Activated CD4-positive, alpha-beta T cell treated with anti-CD3 and anti-CD28 coated beads for 36 hours (primary cell): ENCODE measurements at regions of chr2 and their contacts with region 1.

Region 1: DNA sequence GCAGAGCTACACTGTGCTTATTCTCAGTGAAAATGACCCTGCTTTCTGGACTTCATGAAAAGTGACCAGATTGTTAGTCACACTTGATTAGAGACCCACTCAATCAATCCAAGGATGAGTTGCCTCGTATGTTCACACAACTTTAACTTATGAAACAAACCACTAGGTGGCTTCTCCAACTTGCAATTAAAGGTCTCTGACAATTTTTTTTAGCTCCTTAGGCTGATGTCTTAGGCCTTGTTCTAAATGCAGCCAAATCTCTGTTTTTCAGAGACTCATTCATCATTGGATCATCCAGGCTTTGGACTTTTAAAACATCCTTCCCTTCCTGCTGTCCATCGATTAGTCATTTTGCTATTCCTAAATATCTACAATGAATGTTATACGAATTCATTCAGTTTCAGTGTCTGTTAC is 63.4 kb downstream of the MREG start:
- DNase-seq: no peak
- ATAC-seq: peak; percentile 87
- H3K4me3 Mint-ChIP-seq: no peak overlapping the region
- H3K27ac Mint-ChIP-seq: no peak overlapping the region
- H3K4me1 Mint-ChIP-seq: no peaks in the 10 kb centered on the region
- H3K27me3 Mint-ChIP-seq: no peaks in the 10 kb centered on the region

Region 2: DNA sequence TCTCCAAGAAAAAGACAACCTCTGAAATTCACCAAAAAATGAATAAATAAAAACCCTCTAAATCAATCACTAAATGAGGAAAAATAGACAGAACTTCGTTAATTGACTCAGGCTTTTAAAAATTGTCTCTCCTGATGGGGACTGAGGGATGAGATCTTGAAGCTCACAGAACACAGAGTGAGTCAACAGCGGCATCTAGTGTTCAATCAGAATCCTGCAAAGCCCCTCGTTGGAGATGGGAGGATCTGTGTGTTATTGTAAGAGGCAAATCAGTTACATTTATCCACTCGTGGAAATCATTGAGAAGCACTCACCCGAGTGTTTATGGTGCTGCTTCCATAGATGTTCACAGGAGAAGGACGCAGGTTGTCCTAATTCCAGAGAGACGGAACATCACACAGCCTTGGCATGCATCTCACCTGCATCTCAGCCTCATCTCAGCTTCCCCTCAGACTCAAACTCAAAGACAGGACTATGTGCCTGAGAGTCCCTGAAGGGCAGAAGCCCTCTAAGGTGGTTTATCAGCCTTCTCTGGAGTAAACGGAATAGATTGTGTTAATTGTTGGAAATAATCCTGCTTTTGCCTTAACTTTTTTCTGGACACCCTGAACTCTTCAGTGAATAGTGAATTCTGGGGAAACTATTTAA is 18.6 kb before region 1 on chr2:
- CTCF ChIA-PET with region 1: interaction called, 17 read pairs
- POLR2A ChIA-PET with region 1: no interaction called
- intact Hi-C with region 1: no loop called
- DNase-seq: peak; percentile 74
- ATAC-seq: peak; percentile 77
- H3K4me3 Mint-ChIP-seq: no peak overlapping the region
- H3K27ac Mint-ChIP-seq: no peak overlapping the region
- H3K4me1 Mint-ChIP-seq: peaks cover 9% of the 10 kb centered on the region
- H3K27me3 Mint-ChIP-seq: peaks cover 3% of the 10 kb centered on the region

Region 3: DNA sequence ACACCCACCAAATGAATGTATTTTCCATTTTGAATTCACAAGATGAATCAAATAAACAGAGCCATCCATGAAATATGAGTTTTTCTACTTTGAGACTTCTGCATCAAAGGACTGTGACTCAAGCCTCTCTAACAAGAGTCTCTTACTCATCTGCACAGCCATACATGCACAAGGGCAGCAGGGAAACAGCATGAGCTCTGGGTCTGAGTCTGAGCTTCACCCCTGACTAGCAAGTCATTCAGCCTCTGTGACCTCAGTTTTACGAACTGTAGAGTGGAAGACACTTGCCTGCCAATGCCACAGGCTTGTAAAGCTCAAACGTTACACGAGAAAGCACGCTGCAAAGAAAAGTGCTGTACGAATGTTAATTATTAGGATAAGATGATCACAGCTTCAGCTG is 20.4 kb after region 1 on chr2:
- CTCF ChIA-PET with region 1: interaction called, 23 read pairs
- POLR2A ChIA-PET with region 1: no interaction called
- intact Hi-C with region 1: no loop called
- DNase-seq: peak; percentile 72
- ATAC-seq: peak; percentile 99
- H3K4me3 Mint-ChIP-seq: no peak overlapping the region
- H3K27ac Mint-ChIP-seq: peak overlapping the region; percentile 74
- H3K4me1 Mint-ChIP-seq: peaks cover 30% of the 10 kb centered on the region
- H3K27me3 Mint-ChIP-seq: no peaks in the 10 kb centered on the region

Region 4: GRCh38 chr2:216013080-216013909 is 63.3 kb after region 1 on chr2 and contains the start of gene MREG:
- CTCF ChIA-PET with region 1: interaction called, 15 read pairs
- POLR2A ChIA-PET with region 1: no interaction called
- intact Hi-C with region 1: loop called in 1 of 2 experiments (anchors 2 kb)
- DNase-seq: peak; percentile 94
- ATAC-seq: peak; percentile 70
- H3K4me3 Mint-ChIP-seq: peak within 1 kb of the TSS; percentile 88
- H3K27ac Mint-ChIP-seq: peak within 1 kb of the TSS; percentile 81
- H3K4me1 Mint-ChIP-seq: peaks cover 60% of the 10 kb centered on the region
- H3K27me3 Mint-ChIP-seq: no peaks in the 10 kb centered on the region
- total RNA-seq, gene MREG: 9.1 to 9.8 TPM

Region 5: GRCh38 chr2:216666461-216667233 is 716.6 kb after region 1 on chr2:
- CTCF ChIA-PET with region 1: no interaction called
- POLR2A ChIA-PET with region 1: no interaction called
- intact Hi-C with region 1: loop called in 1 of 2 experiments (anchors 5 kb)
- DNase-seq: peak; percentile 80
- ATAC-seq: peak; percentile 85
- H3K4me3 Mint-ChIP-seq: no peak overlapping the region
- H3K27ac Mint-ChIP-seq: no peak overlapping the region
- H3K4me1 Mint-ChIP-seq: no peaks in the 10 kb centered on the region
- H3K27me3 Mint-ChIP-seq: peaks cover 2% of the 10 kb centered on the region